CD8-positive, alpha-beta T cell (primary cell): ENCODE measurements at regions of chr11 and their contacts with region 1.

Region 1: DNA sequence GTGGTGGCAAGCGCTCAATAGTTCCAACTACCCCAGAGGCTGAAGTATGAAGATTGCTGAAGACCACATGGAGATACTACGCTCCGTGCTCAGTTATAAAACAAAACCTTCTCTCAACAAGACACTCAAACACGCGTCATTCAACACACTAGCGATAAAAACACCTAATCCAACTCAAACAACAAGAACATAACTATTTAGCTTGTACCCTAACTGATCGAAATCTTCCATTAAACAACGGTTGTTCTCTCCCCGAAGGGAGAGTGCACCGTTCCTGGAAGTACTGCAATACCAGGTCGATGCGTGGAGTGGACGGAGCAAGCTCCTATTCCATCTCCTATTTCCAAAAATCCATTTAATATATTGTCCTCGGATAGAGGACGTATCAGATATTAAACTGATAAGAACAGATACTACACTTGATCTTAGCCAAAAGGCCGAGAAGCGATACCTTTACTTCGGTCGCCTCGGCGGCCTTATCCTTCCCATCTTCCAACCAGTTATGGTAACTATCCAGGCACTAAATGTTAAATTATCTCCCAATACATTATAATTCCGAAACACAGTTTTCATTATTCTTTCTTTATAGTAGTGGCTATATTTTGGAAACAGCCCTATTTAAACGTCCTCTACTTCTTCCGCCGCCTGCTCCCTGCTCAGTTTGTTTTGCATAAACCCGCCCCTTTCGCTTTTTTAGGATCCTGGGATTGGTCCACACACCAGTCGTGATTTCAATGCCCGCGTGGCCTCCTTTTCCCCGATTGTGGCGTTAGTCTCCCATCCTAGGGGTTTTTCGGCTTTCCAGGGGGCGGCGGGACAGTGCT is 2.2 kb upstream of the WDR74 start:
- DNase-seq: peak; percentile 69 to 95 (median 80)
- ATAC-seq: peak; percentile 49
- H3K4me3 ChIP-seq: peak overlapping the region; percentile 61 to 79
- H3K4me3 Mint-ChIP-seq: no peak overlapping the region
- H3K27ac ChIP-seq: peak overlapping the region; percentile 97 to 99
- H3K27ac Mint-ChIP-seq: no peak overlapping the region
- H3K4me1 ChIP-seq: peaks cover 32% of the 10 kb centered on the region
- H3K4me1 Mint-ChIP-seq: peaks cover 25% of the 10 kb centered on the region
- H3K27me3 ChIP-seq: no peaks in the 10 kb centered on the region
- H3K27me3 Mint-ChIP-seq: no peaks in the 10 kb centered on the region
- CTCF ChIP-seq: no peak

Region 2: GRCh38 chr11:62601394-62602140 is 240.0 kb before region 1 on chr11 and contains the start of gene MTA2:
- CTCF ChIA-PET with region 1: no interaction called
- POLR2A ChIA-PET with region 1: interaction called, 10 read pairs
- intact Hi-C with region 1: no loop called
- DNase-seq: peak; percentile 98 to 100 (median 99)
- ATAC-seq: peak; percentile 77
- H3K4me3 ChIP-seq: peak within 1 kb of the TSS; percentile 62 to 98
- H3K4me3 Mint-ChIP-seq: peak within 1 kb of the TSS; percentile 89
- H3K27ac ChIP-seq: peak within 1 kb of the TSS; percentile 83 to 86
- H3K27ac Mint-ChIP-seq: peak within 1 kb of the TSS; percentile 92
- H3K4me1 ChIP-seq: peaks cover 22% of the 10 kb centered on the region
- H3K4me1 Mint-ChIP-seq: peaks cover 57% of the 10 kb centered on the region
- H3K27me3 ChIP-seq: no peaks in the 10 kb centered on the region
- H3K27me3 Mint-ChIP-seq: no peaks in the 10 kb centered on the region
- CTCF ChIP-seq: no peak
- total RNA-seq, gene MTA2: 148 to 154 TPM

Region 3: DNA sequence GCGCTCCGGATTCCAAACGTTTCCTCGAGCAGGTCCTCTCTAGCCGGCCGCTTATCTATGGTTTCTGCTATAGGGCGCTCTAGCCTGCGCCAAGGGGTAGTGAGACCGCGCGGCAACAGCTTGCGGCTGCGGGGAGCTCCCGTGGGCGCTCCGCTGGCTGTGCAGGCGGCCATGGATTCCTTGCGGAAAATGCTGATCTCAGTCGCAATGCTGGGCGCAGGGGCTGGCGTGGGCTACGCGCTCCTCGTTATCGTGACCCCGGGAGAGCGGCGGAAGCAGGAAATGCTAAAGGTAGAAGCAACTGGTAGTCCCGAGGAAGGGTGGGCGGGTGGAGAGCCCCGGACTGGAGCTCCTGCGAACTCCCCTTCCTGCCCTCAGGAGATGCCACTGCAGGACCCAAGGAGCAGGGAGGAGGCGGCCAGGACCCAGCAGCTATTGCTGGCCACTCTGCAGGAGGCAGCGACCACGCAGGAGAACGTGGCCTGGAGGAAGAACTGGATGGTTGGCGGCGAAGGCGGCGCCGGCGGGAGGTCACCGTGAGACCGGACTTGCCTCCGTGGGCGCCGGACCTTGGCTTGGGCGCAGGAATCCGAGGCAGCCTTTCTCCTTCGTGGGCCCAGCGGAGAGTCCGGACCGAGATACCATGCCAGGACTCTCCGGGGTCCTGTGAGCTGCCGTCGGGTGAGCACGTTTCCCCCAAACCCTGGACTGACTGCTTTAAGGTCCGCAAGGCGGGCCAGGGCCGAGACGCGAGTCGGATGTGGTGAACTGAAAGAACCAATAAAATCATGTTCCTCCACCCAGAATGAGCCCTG is 169.8 kb before region 1 on chr11 and contains the starts of genes LBHD1 and UQCC3:
- CTCF ChIA-PET with region 1: no interaction called
- POLR2A ChIA-PET with region 1: interaction called, 11 read pairs
- intact Hi-C with region 1: no loop called
- DNase-seq: peak; percentile 41 to 87 (median 70)
- ATAC-seq: peak; percentile 63
- H3K4me3 ChIP-seq: peak within 1 kb of the TSS; percentile 93 to 99
- H3K4me3 Mint-ChIP-seq: peak within 1 kb of the TSS; percentile 99
- H3K27ac ChIP-seq: peak within 1 kb of the TSS; percentile 77 to 78
- H3K27ac Mint-ChIP-seq: peak within 1 kb of the TSS; percentile 92
- H3K4me1 ChIP-seq: peaks cover 36% of the 10 kb centered on the region
- H3K4me1 Mint-ChIP-seq: peaks cover 62% of the 10 kb centered on the region
- H3K27me3 ChIP-seq: no peaks in the 10 kb centered on the region
- H3K27me3 Mint-ChIP-seq: no peaks in the 10 kb centered on the region
- CTCF ChIP-seq: no peak
- total RNA-seq, gene LBHD1: 14.5 to 14.6 TPM
- total RNA-seq, gene UQCC3: 1.1 to 1.7 TPM

Region 4: DNA sequence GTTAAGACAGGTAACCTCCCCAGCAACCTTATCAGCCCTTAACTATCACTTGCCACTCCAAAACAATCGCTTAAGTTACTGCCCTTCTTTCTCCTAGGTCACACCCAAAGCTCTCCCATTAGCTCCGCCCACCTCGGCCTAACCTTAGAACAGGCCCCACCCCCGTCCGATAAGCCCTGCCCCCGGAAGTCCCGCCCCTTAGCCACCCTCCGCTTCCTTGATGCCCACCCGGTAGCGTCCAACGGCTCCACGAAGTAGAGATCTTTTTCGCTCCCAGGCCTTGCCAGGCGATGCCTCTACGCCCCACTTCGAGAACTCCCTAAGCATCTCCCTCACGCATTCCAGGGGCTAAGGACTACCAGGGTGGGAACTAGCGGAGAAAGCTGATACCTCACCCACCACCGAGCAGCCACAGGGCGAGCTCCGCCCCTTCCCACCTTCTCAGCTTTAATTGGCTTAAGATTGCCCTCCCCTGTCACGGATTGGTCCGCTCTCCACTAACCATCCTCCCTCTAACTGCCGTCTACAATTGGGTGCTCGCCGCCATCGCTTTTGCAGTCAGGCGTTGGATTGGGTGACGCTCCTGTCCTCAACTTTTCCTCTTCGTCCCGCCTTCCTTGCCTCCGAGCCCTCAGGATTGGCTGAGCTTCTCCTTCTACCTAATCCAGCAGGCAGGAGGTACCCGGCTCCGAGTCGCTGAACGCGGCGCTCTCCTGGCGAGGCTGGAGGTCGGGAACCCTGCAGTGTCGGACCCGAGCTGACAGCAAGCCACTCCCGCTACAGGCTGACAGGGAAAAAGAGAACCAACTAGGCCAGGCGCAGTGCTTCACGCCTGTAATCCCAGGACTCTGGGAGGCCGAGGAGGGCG is 87.6 kb before region 1 on chr11 and contains the start of gene ZBTB3:
- CTCF ChIA-PET with region 1: no interaction called
- POLR2A ChIA-PET with region 1: interaction called, 50 read pairs
- intact Hi-C with region 1: no loop called
- DNase-seq: peak; percentile 93 to 100 (median 96)
- ATAC-seq: peak; percentile 93
- H3K4me3 ChIP-seq: peak within 1 kb of the TSS; percentile 72 to 88
- H3K4me3 Mint-ChIP-seq: peak within 1 kb of the TSS; percentile 99
- H3K27ac ChIP-seq: peak within 1 kb of the TSS; percentile 64 to 91
- H3K27ac Mint-ChIP-seq: peak within 1 kb of the TSS; percentile 98
- H3K4me1 ChIP-seq: peaks cover 28% of the 10 kb centered on the region
- H3K4me1 Mint-ChIP-seq: peaks cover 32% of the 10 kb centered on the region
- H3K27me3 ChIP-seq: no peaks in the 10 kb centered on the region
- H3K27me3 Mint-ChIP-seq: no peaks in the 10 kb centered on the region
- CTCF ChIP-seq: no peak
- total RNA-seq, gene ZBTB3: 3.7 to 4.8 TPM

Region 5: GRCh38 chr11:62805076-62805892 is 36.3 kb before region 1 on chr11 and contains the start of gene NXF1:
- CTCF ChIA-PET with region 1: no interaction called
- POLR2A ChIA-PET with region 1: interaction called, 30 read pairs
- intact Hi-C with region 1: loop called in 1 of 2 experiments (anchors 1 kb)
- DNase-seq: peak; percentile 92 to 99 (median 96)
- ATAC-seq: peak; percentile 86
- H3K4me3 ChIP-seq: peak within 1 kb of the TSS; percentile 74 to 88
- H3K4me3 Mint-ChIP-seq: peak within 1 kb of the TSS; percentile 100
- H3K27ac ChIP-seq: peak within 1 kb of the TSS; percentile 78 to 95
- H3K27ac Mint-ChIP-seq: peak within 1 kb of the TSS; percentile 99
- H3K4me1 ChIP-seq: peaks cover 20% of the 10 kb centered on the region
- H3K4me1 Mint-ChIP-seq: peaks cover 37% of the 10 kb centered on the region
- H3K27me3 ChIP-seq: no peaks in the 10 kb centered on the region
- H3K27me3 Mint-ChIP-seq: no peaks in the 10 kb centered on the region
- CTCF ChIP-seq: no peak
- total RNA-seq, gene NXF1: 356 TPM

Region 6: DNA sequence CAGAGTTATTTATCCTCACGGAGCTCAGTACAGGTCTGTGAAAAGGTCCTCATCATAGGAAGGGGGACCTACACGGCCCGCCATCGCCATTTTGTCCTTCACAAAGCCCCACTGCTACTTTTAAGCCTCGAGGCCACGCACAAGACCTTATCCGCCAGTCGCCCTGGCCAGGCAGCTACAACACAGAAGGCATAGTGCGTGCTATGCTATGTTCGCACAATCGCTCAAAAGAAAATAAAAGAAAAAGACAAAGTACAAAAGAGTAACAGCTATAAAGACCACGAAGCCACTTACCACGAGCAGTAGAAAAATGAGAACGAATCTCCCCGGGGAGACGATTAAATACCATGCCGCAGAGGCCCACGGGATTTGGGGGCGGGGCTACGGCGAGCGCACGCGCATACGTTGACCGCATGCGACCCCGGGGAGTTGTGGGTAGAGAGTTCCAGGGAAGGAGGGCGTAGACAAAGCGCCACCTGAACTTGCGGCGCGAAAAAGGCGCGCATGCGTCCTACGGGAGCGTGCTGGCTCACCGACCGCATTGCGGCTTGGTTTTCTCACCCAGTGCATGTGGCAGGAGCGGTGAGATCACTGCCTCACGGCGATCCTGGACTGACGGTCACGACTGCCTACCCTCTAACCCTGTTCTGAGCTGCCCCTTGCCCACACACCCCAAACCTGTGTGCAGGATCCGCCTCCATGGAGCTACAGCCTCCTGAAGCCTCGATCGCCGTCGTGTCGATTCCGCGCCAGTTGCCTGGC is 14.2 kb after region 1 on chr11:
- CTCF ChIA-PET with region 1: interaction called, 6 read pairs
- POLR2A ChIA-PET with region 1: interaction called, 359 read pairs
- intact Hi-C with region 1: loop called (anchors 1 kb)
- DNase-seq: peak; percentile 96 to 100 (median 98)
- ATAC-seq: peak; percentile 91
- H3K4me3 ChIP-seq: peak overlapping the region; percentile 82 to 89
- H3K4me3 Mint-ChIP-seq: peak overlapping the region; percentile 96
- H3K27ac ChIP-seq: peak overlapping the region; percentile 76 to 84
- H3K27ac Mint-ChIP-seq: peak overlapping the region; percentile 91
- H3K4me1 ChIP-seq: peaks cover 36% of the 10 kb centered on the region
- H3K4me1 Mint-ChIP-seq: peaks cover 56% of the 10 kb centered on the region
- H3K27me3 ChIP-seq: no peaks in the 10 kb centered on the region
- H3K27me3 Mint-ChIP-seq: no peaks in the 10 kb centered on the region
- CTCF ChIP-seq: no peak

Region 7: DNA sequence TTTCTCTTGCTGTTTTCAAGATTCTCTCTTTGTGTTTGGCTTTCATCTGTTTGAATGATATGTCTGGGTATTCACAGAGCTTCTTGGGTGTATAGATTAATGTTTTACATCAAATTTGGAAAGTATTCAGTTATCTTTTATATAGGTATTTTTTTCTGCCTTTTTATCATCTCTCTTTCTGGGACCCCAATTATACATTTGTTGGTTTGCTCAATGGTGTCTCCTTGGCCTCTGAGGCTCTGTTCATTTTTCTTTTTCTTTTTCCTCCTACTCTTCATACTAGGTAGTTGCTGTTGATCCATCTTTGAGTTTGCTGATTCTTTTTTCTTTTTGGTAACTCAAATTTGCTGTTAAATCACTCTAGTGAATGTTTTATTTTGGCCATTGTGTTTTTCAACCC is 635.0 kb after region 1 on chr11:
- CTCF ChIA-PET with region 1: no interaction called
- POLR2A ChIA-PET with region 1: no interaction called
- intact Hi-C with region 1: no loop called
- DNase-seq: no peak
- ATAC-seq: no peak
- H3K4me3 ChIP-seq: no peak overlapping the region
- H3K4me3 Mint-ChIP-seq: no peak overlapping the region
- H3K27ac ChIP-seq: no peak overlapping the region
- H3K27ac Mint-ChIP-seq: no peak overlapping the region
- H3K4me1 ChIP-seq: peaks cover 3% of the 10 kb centered on the region
- H3K4me1 Mint-ChIP-seq: no peaks in the 10 kb centered on the region
- H3K27me3 ChIP-seq: no peaks in the 10 kb centered on the region
- H3K27me3 Mint-ChIP-seq: no peaks in the 10 kb centered on the region
- CTCF ChIP-seq: no peak